HepG2 (cell line): ENCODE measurements at regions of chr3 and their contacts with region 1.

Region 1: GRCh38 chr3:150408221-150409102 is at the start of gene TSC22D2:
- DNase-seq: peak; percentile 80
- ATAC-seq: peak; percentile 80
- H3K4me3 ChIP-seq: peak within 1 kb of the TSS; percentile 89 to 97 (median 90)
- H3K27ac ChIP-seq: peak within 1 kb of the TSS; percentile 99
- H3K4me1 ChIP-seq: peaks cover 9% of the 10 kb centered on the region
- H3K27me3 ChIP-seq: no peaks in the 10 kb centered on the region; a peak in 1 of 5 replicates
- CTCF ChIP-seq: no peak
- EP300 ChIP-seq: no peak
- POLR2A ChIP-seq: peak; percentile 70 to 84; a peak in 3 of 4 replicates
- RAD21 ChIP-seq: peak; percentile 54; the same call in 1 of the 2 replicates
- total RNA-seq, gene TSC22D2: 8.2 and 11.5 TPM in 2 replicates

Region 2: GRCh38 chr3:149936812-149937233 is 471.6 kb before region 1 on chr3:
- CTCF ChIA-PET with region 1: no interaction called
- POLR2A ChIA-PET with region 1: no interaction called
- in situ Hi-C with region 1: no loop called
- intact Hi-C with region 1: loop called (anchors 10 kb)
- DNase-seq: peak; percentile 47
- ATAC-seq: peak; percentile 88
- H3K4me3 ChIP-seq: no peak overlapping the region
- H3K27ac ChIP-seq: no peak overlapping the region
- H3K4me1 ChIP-seq: no peaks in the 10 kb centered on the region
- H3K27me3 ChIP-seq: no peaks in the 10 kb centered on the region
- CTCF ChIP-seq: peak; percentile 88
- EP300 ChIP-seq: no peak
- POLR2A ChIP-seq: no peak
- RAD21 ChIP-seq: peak; percentile 67

Region 3: GRCh38 chr3:150371741-150372254 is 36.7 kb before region 1 on chr3:
- CTCF ChIA-PET with region 1: no interaction called
- POLR2A ChIA-PET with region 1: interaction called, 6 read pairs
- in situ Hi-C with region 1: no loop called
- intact Hi-C with region 1: loop called (anchors 2 kb)
- DNase-seq: peak; percentile 85
- ATAC-seq: peak; percentile 64
- H3K4me3 ChIP-seq: peak overlapping the region; percentile 4 to 25 (median 15); a peak in 2 of 6 replicates
- H3K27ac ChIP-seq: no peak overlapping the region
- H3K4me1 ChIP-seq: peaks cover 31% of the 10 kb centered on the region
- H3K27me3 ChIP-seq: no peaks in the 10 kb centered on the region
- CTCF ChIP-seq: no peak
- EP300 ChIP-seq: peak in 1 of 2 experiments; percentile 16; a peak in 1 of 4 replicates
- POLR2A ChIP-seq: no peak
- RAD21 ChIP-seq: no peak

Region 4: GRCh38 chr3:150495563-150496168 is 87.2 kb after region 1 on chr3:
- CTCF ChIA-PET with region 1: interaction called, 4 read pairs
- POLR2A ChIA-PET with region 1: no interaction called
- in situ Hi-C with region 1: no loop called
- intact Hi-C with region 1: loop called (anchors 1 kb)
- DNase-seq: peak; percentile 32
- ATAC-seq: no peak
- H3K4me3 ChIP-seq: no peak overlapping the region
- H3K27ac ChIP-seq: no peak overlapping the region
- H3K4me1 ChIP-seq: no peaks in the 10 kb centered on the region
- H3K27me3 ChIP-seq: peaks cover 0 to 1% of the 10 kb centered on the region in 2 experiments; a peak in 1 of 5 replicates
- CTCF ChIP-seq: peak; percentile 69
- EP300 ChIP-seq: no peak
- POLR2A ChIP-seq: no peak
- RAD21 ChIP-seq: peak; percentile 35; the same call in 1 of the 2 replicates

Region 5: GRCh38 chr3:150737874-150738713 is 329.6 kb after region 1 on chr3:
- CTCF ChIA-PET with region 1: no interaction called
- POLR2A ChIA-PET with region 1: no interaction called
- in situ Hi-C with region 1: no loop called
- intact Hi-C with region 1: loop called (anchors 10 kb)
- DNase-seq: peak; percentile 96
- ATAC-seq: peak; percentile 73
- H3K4me3 ChIP-seq: peak overlapping the region in 1 of 3 experiments; percentile 38; a peak in 1 of 6 replicates
- H3K27ac ChIP-seq: peak overlapping the region; percentile 99
- H3K4me1 ChIP-seq: peaks cover 100% of the 10 kb centered on the region
- H3K27me3 ChIP-seq: no peaks in the 10 kb centered on the region
- CTCF ChIP-seq: no peak
- EP300 ChIP-seq: peak; percentile 41 to 90; a peak in 3 of 4 replicates
- POLR2A ChIP-seq: no peak; a peak in 1 of 4 replicates
- RAD21 ChIP-seq: 0 out of 2 replicates have a peak, but pooled peaks have one; percentile 12